ENCODE measurements at regions of chr5 and their contacts with region 1.

Region 1: DNA sequence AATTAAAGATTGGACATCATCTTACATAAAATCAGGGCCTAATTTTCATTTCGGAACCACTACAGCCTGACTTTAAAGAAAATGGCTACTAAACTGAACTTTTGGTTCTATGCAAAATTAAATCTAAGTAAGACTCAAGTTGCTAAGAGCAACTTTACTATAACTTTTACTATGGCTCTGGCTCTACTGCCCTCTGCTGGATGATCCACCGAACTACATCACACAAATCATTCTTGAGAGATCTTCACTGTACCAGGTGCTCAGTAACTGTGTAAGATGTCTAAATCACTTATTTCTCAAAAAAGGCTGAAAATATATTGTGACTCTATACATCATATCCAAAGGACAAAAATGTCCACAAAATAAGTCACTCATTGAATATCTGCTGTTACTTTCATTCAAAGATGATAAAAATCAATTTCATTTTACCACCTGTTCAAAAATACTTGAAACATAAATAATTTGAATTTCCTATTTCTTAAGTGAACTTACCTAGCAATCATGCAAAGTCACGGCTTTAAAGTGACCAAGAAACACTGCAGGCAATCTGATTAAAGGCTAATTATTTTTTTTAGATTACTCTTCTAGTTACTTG is 13.5 kb downstream of the MOCS2 start:
- DNase-seq: peak in 6 of 10 donors; percentile 41 to 86 (median 58)
- H3K4me3 ChIP-seq: no peak overlapping the region
- H3K27ac ChIP-seq: peak overlapping the region in 4 of 59 donors; percentile 11 to 54 (median 29)
- H3K27me3 ChIP-seq: no peaks in the 10 kb centered on the region
- CTCF ChIP-seq: peak; percentile 83 to 99 (median 94)

Region 2: GRCh38 chr5:52840277-52841050 is 255.6 kb before region 1 on chr5:
- intact Hi-C with region 1: no loop called
- DNase-seq: peak in 1 of 10 donors; percentile 33
- H3K4me3 ChIP-seq: peak overlapping the region in 9 of 59 donors; percentile 5 to 22 (median 16)
- H3K27ac ChIP-seq: peak overlapping the region in 35 of 59 donors; percentile 0 to 78 (median 43)
- H3K27me3 ChIP-seq: no peaks in the 10 kb centered on the region
- CTCF ChIP-seq: no peak

Region 3: GRCh38 chr5:52948418-52949076 is 147.5 kb before region 1 on chr5:
- intact Hi-C with region 1: loop called (anchors 1 to 5 kb)
- DNase-seq: peak in 7 of 10 donors; percentile 15 to 79 (median 44)
- H3K4me3 ChIP-seq: no peak overlapping the region
- H3K27ac ChIP-seq: peak overlapping the region in 10 of 59 donors; percentile 1 to 61 (median 23)
- H3K27me3 ChIP-seq: peaks cover 0 to 7% (median 0%) of the 10 kb centered on the region in 45 donors
- CTCF ChIP-seq: peak; percentile 55 to 93 (median 81)

Measured in dorsolateral prefrontal cortex (tissue), 120 donors.